Right cardiac atrium (tissue), 5 donors: ENCODE measurements at regions of chr17 and their contacts with region 1.

Region 1: GRCh38 chr17:59427425-59427921 is 96.0 kb downstream of the YPEL2 start:
- DNase-seq: no peak
- ATAC-seq: peak; percentile 40 to 51
- H3K4me3 ChIP-seq: no peak overlapping the region
- H3K27ac ChIP-seq: peak overlapping the region; percentile 62
- H3K4me1 ChIP-seq: peaks cover 23% of the 10 kb centered on the region
- H3K27me3 ChIP-seq: no peaks in the 10 kb centered on the region

Region 2: DNA sequence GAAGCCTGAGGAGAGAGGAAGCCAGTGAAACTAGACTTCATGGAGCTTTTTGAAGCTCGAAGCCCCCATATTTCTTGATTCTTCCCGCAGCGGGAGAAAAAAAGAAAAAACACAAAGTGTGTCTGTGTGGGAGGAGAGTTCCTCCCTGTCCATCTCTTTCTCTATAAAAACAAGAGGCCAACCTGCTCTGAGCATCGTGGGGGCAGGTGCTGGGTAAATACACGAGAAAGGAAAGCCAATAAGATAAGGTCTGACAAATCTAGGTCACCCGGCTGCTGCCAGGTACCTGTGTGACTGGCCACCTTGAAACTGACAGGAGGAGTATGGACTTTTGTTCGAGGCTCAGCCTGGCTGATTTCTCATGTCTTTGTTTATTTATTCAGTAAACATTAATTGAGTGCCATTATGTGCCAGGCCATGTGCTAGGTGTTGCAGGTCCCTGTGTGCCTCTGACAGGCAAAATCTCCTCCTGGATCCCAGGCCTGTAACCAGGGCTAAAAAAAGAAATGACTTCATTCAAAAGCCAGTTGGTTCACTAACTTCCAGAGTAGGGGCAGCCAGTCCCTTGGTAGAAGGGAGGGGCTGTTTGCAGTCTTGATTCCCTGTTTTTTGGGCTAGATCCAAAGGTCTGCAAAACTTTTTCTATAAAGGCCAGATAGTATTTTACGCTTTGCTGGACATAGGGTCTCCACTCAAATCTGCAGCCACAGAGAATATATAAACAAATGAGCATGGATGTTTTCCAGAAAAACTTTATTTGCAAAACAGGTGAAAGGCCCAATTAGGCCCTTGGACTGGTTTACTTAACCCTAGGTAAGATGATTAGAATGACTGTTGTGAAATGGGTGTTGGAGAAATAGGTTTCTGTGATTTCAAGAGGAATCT is 60.5 kb before region 1 on chr17:
- intact Hi-C with region 1: loop called in 1 of 4 experiments (anchors 5 kb)
- DNase-seq: peak in 1 of 3 donors; percentile 53
- ATAC-seq: peak; percentile 75 to 76
- H3K4me3 ChIP-seq: no peak overlapping the region
- H3K27ac ChIP-seq: peak overlapping the region; percentile 99
- H3K4me1 ChIP-seq: peaks cover 62% of the 10 kb centered on the region
- H3K27me3 ChIP-seq: no peaks in the 10 kb centered on the region

Region 3: GRCh38 chr17:59498530-59499307 is 71.2 kb after region 1 on chr17:
- intact Hi-C with region 1: no loop called
- DNase-seq: no peak
- ATAC-seq: no peak
- H3K4me3 ChIP-seq: no peak overlapping the region
- H3K27ac ChIP-seq: no peak overlapping the region
- H3K4me1 ChIP-seq: no peaks in the 10 kb centered on the region
- H3K27me3 ChIP-seq: no peaks in the 10 kb centered on the region